Head of caudate nucleus (tissue), 42 donors: ENCODE measurements at regions of chr15 and their contacts with region 1.

Region 1: DNA sequence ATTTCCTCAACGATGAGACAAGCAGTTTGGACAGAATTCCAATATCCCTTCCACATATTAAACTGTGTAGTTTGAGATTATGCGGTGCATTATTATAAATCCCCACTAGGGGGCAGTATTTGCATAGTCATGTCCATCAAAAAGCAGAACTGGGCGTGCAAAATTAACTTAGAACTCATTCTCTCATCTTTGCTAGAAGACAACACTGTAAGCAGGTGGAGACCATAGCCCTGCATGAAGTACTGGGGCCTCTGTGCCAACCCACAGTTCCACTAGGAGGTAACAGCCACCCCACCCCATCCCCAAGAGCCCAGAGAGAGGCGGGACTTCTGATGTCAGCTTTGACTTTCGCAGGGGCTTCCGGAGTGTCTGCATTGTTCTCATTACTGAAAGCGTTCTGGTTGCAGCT is 106.6 kb upstream of the TMC3 start:
- DNase-seq: peak in 26 of 42 donors; percentile 7 to 86 (median 39)

Region 2: DNA sequence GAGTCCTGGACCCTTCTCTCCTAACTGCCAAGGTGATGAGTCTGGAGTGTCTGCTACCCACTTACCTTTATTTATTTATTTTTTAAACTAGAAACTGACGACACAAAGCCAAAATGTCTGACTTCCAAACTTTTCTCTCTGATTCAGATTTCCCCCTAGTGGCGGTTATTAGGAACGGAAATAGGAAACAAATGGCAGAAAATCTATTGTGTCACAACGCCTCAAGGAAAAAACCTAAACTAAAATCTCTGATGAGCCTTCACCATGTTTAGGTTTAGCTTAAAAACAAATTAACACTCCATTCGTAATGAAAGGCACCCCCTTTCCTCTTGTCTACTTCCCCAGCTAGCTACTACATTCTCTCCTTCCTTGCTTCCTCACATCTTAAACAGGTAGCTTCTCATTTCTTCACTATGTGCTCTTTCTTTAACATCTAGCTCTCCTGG is 659.2 kb after region 1 on chr15:
- intact Hi-C with region 1: loop called (anchors 10 kb)
- DNase-seq: peak in 3 of 42 donors; percentile 10 to 49 (median 10)